ENCODE measurements at regions of chr3 and their contacts with region 1.

Region 1: DNA sequence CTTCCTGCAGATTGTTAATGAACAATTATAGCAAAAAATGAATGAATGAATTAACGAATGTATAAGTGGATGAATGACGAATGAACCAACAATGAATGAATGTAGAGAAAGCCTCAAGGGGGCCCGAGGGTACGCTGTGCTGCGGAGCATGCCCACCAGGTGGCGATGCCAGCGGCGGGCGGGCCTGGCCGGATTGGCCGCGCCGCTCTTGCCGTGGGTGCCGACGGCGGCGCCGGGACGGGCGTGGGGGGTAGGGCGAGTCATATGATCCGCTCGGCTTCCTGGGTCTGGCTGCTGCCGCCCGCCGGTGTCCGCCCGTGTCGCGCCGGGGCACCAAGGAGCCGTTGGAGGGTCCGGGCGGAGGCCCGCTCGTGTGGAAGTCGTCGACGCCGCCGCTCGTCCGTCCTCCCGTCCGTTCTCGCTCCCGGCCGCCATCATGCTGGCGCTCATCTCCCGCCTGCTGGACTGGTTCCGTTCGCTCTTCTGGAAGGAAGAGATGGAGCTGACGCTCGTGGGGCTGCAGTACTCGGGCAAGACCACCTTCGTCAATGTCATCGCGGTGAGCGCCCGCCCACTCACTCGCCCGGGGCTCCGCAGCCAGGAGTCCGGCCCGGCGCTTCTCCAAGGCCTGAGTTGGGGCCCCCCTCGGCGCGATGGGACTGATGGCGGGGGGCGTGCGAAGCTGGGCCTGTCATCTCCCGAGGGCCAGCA is at the start of gene ARL8B:
- DNase-seq: peak; percentile 94
- H3K4me3 Mint-ChIP-seq: peak within 1 kb of the TSS; percentile 90
- H3K27ac Mint-ChIP-seq: peak within 1 kb of the TSS; percentile 90
- H3K4me1 Mint-ChIP-seq: peaks cover 39% of the 10 kb centered on the region
- H3K27me3 Mint-ChIP-seq: no peaks in the 10 kb centered on the region
- total RNA-seq, gene ARL8B: 38.4 to 39.3 TPM

Region 2: DNA sequence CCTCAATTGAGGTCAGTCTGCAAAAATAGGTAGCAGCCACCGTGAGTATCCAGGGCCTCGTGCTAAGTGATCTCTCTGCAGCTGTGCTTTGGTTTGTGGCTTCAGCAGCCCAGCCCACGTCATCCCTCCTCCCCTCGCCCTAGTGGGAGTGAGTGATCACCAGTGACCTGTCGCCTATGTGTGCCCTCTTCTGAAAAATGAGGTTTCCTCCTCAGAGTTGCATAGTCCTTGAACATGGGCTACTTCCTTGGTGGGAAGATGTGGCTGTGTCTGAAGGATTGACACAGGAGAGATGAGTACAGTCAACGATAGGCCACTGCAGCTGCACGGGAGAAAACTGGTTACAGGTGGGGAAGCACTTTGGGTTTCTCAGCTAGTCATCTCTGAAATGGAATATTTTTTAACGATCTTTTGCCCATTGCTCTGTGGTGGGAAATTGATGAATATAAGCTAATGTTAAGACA is 287.8 kb before region 1 on chr3:
- CTCF ChIA-PET with region 1: interaction called, 3 read pairs
- intact Hi-C with region 1: loop called (anchors 2 kb)
- DNase-seq: peak; percentile 84
- H3K4me3 Mint-ChIP-seq: peak overlapping the region; percentile 13
- H3K27ac Mint-ChIP-seq: peak overlapping the region; percentile 93
- H3K4me1 Mint-ChIP-seq: peaks cover 85% of the 10 kb centered on the region
- H3K27me3 Mint-ChIP-seq: no peaks in the 10 kb centered on the region

Region 3: DNA sequence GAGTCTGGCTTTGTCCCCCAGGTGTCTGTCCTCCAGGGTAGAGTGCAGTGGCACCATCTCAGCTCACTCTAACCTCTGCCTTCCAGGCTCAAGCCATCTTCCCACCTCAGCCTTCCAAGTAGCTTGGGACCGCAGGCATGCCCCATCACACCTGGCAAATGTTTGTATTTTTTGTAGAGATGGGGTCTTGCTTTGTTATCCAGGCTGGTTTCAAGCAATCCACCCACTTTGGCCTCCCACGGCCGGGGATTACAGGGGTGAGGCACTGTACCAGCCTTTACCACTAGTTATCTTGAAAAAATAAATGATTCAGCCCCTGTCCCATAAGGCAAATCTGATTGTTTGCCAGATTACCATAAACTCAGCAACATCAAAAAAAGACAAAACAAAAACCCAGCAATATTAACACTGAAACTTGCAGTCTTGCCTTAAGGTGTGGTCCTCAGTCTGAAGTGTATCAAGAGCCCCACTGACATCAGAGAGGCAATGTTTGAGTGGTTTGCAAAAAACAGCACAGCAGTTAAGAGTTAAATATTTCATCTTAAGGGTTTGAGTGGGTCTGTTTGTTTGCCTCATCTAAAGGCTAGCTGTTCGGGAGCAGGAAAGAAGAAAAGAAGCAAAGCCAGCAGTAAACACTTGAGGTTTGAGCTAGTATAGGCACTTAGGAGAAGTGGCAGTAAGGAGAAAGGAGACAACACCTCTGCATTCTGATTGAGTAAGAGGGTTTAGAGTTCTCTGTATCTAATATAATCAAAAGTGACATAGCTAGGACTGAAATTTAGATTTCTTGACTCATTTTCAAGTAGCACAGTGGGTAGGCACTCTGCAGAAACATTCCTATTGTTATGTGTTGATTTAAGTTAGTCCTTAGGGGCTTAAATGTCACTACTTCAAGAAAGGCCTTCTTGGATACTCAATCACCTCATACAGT is 39.0 kb after region 1 on chr3:
- CTCF ChIA-PET with region 1: interaction called, 5 read pairs
- intact Hi-C with region 1: loop called (anchors 1 kb)
- DNase-seq: peak; percentile 26
- H3K4me3 Mint-ChIP-seq: no peak overlapping the region
- H3K27ac Mint-ChIP-seq: peak overlapping the region; percentile 54
- H3K4me1 Mint-ChIP-seq: peaks cover 72% of the 10 kb centered on the region
- H3K27me3 Mint-ChIP-seq: no peaks in the 10 kb centered on the region

Region 4: GRCh38 chr3:5187156-5187919 is 65.2 kb after region 1 on chr3 and contains the start of gene EDEM1:
- CTCF ChIA-PET with region 1: interaction called, 54 read pairs
- intact Hi-C with region 1: loop called (anchors 1 kb)
- DNase-seq: peak; percentile 95
- H3K4me3 Mint-ChIP-seq: peak within 1 kb of the TSS; percentile 96
- H3K27ac Mint-ChIP-seq: peak within 1 kb of the TSS; percentile 99
- H3K4me1 Mint-ChIP-seq: peaks cover 27% of the 10 kb centered on the region
- H3K27me3 Mint-ChIP-seq: no peaks in the 10 kb centered on the region
- total RNA-seq, gene EDEM1: 137 to 138 TPM

Region 5: DNA sequence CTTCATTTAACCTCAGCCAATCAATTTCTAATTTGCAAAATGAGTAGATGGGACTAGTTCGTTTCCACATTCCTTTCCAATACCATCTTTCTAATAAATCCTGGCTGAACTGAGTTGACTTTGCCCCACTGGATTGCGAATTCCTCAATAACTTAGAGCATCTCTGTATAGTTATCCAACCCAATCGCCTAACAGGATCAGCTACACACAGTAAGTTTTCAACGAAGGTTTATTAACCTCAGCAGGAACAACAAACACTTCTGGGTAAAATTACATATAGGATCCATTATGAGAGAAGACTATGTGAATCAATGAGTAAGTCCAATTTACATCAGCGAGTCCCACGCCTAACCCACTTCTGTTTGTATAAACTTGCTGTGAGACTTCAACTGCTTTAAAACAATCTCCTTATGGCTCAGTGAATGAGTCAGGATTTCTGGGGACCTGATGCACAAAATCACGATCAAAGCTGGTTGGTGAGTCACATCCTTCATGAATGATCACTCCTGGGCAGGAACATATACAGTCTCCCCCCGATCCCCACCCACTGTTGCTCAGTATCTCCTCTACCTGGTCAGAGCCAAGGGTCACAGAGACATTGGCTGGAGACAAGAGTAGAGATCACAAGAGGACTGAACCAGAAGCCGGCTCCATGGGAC is 208.1 kb after region 1 on chr3:
- CTCF ChIA-PET with region 1: interaction called, 3 read pairs
- intact Hi-C with region 1: loop called (anchors 1 kb)
- DNase-seq: peak; percentile 63
- H3K4me3 Mint-ChIP-seq: no peak overlapping the region
- H3K27ac Mint-ChIP-seq: peak overlapping the region; percentile 15
- H3K4me1 Mint-ChIP-seq: peaks cover 23% of the 10 kb centered on the region
- H3K27me3 Mint-ChIP-seq: peaks cover 3% of the 10 kb centered on the region